ENCODE measurements at regions of chr15 and their contacts with region 1.

Region 1: DNA sequence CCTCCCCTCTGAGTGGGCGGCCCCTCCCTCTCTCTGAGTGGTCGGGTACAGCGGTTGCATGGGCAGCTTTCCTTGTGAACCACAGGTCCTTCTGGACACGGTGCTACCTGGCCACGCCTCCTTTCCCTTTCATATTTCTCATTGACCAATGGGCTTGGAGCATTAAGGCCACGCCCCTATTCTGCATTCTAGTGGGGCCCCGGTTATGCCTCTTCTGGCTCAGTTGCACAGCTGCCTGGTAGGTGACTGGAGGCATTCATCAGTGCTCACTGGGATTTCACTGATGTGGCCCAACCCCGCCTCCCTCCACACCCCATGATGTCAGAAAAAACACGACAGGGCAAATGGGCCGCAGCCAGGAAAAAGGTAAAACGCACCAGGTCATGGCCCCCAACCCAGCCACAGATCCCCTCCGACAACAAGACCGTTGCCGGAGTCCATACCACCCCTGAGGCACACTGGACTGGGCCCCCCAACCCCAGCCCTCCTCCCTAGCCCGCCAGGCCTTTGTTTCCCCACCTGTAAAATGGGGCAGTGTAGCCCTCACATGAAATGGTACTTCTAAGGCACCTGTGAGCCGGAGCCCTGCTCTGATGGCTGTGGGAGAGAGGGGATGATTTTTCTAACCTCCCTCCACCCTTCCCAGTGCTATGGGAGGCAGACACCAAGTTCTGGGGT is 26.3 kb downstream of the NGRN start:
- DNase-seq: peak in 2 of 9 experiments; percentile 22 to 34
- ATAC-seq: no peak
- H3K4me3 ChIP-seq: no peak overlapping the region
- H3K4me3 Mint-ChIP-seq: no peak overlapping the region
- H3K27ac ChIP-seq: no peak overlapping the region
- H3K27ac Mint-ChIP-seq: no peak overlapping the region
- H3K4me1 ChIP-seq: no peaks in the 10 kb centered on the region
- H3K4me1 Mint-ChIP-seq: peaks cover 3% of the 10 kb centered on the region
- H3K27me3 ChIP-seq: no peaks in the 10 kb centered on the region
- H3K27me3 Mint-ChIP-seq: peaks cover 4% of the 10 kb centered on the region
- CTCF ChIP-seq: no peak

Region 2: DNA sequence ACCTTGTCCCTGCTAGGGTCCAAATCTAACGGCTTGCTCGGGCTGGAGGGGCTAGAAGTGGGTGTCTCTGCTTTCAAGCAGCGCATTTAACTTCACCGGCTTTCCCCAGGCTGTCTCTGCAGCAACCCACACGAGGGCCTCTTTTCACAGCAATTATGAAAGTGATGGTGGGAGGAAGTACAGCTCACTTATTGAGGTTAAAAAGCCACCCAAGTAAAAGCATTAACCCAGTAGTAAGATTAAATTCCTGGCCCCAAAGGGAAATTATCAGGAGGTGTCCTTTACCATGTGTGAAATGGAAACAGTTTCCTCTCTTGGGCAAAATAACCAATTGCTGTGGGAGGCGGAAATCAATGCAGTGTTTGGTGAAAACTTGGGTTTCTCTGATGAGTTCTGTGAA is 14.7 kb after region 1 on chr15:
- CTCF ChIA-PET with region 1: interaction called, 22 read pairs
- POLR2A ChIA-PET with region 1: interaction called, 4 read pairs
- intact Hi-C with region 1: no loop called
- DNase-seq: peak in 5 of 9 experiments; percentile 9 to 55 (median 36)
- ATAC-seq: peak; percentile 62
- H3K4me3 ChIP-seq: no peak overlapping the region
- H3K4me3 Mint-ChIP-seq: peak overlapping the region; percentile 53
- H3K27ac ChIP-seq: peak overlapping the region in 1 of 2 experiments; percentile 55
- H3K27ac Mint-ChIP-seq: peak overlapping the region; percentile 81
- H3K4me1 ChIP-seq: peaks cover 13% of the 10 kb centered on the region
- H3K4me1 Mint-ChIP-seq: peaks cover 19% of the 10 kb centered on the region
- H3K27me3 ChIP-seq: no peaks in the 10 kb centered on the region
- H3K27me3 Mint-ChIP-seq: no peaks in the 10 kb centered on the region
- CTCF ChIP-seq: no peak

Region 3: GRCh38 chr15:90343302-90343790 is 51.5 kb after region 1 on chr15:
- CTCF ChIA-PET with region 1: no interaction called
- POLR2A ChIA-PET with region 1: no interaction called
- intact Hi-C with region 1: no loop called
- DNase-seq: no peak
- ATAC-seq: no peak
- H3K4me3 ChIP-seq: no peak overlapping the region
- H3K4me3 Mint-ChIP-seq: no peak overlapping the region
- H3K27ac ChIP-seq: no peak overlapping the region
- H3K27ac Mint-ChIP-seq: no peak overlapping the region
- H3K4me1 ChIP-seq: peaks cover 10% of the 10 kb centered on the region
- H3K4me1 Mint-ChIP-seq: peaks cover 9% of the 10 kb centered on the region
- H3K27me3 ChIP-seq: no peaks in the 10 kb centered on the region
- H3K27me3 Mint-ChIP-seq: no peaks in the 10 kb centered on the region
- CTCF ChIP-seq: no peak

Region 4: DNA sequence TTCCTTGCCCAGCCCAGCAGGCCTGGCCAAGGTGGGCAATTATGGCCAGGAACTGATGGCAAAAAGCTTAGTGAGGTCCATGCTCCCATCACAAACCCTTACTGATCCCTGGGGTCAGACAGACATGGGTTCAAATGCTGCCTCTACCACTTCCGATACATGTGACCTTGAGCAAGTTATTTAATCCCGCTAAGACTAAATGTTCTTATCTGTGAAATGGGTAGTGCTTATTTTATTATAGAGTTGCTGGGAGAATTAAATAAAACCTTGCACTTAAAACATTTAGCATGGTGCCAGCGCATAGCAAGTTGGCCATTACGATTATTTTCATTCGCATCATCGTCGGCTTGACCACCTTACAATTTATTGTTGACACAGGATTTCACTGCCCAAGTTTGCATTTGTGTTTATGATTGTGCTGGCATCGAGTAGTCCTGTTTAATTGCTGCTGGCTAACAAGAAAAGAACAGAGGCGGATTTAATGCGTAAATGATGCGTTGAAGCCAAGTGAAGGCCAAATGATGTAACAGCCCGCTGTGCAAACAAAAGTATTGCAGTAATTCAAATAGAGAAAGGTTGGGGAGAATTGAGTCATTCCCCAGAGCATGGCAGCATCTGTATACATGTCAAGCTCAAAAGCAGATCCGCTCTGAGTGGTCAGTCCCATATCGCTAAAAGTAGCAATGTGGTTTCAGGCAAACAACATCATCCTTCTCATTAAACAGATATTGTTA is 569.3 kb after region 1 on chr15:
- CTCF ChIA-PET with region 1: no interaction called
- POLR2A ChIA-PET with region 1: no interaction called
- intact Hi-C with region 1: no loop called
- DNase-seq: no peak
- ATAC-seq: no peak
- H3K4me3 ChIP-seq: no peak overlapping the region
- H3K4me3 Mint-ChIP-seq: no peak overlapping the region
- H3K27ac ChIP-seq: no peak overlapping the region
- H3K27ac Mint-ChIP-seq: no peak overlapping the region
- H3K4me1 ChIP-seq: peaks cover 17% of the 10 kb centered on the region
- H3K4me1 Mint-ChIP-seq: peaks cover 18% of the 10 kb centered on the region
- H3K27me3 ChIP-seq: no peaks in the 10 kb centered on the region
- H3K27me3 Mint-ChIP-seq: no peaks in the 10 kb centered on the region
- CTCF ChIP-seq: no peak